Activated T-helper 1 cell treated with anti-CD3 and anti-CD28 coated beads, Interleukin-12 subunit alpha, Interleukin-12 subunit beta, Interleukin-2, Interleukin-4 antibody, amounts not matched to agents 30 ng/mL and 10 ng/mL and 1 ng/mL, durations not matched to agents 14 hours and 24 hours and 36 hours (primary cell): ENCODE measurements at regions of chr4 and their contacts with region 1.

Region 1: DNA sequence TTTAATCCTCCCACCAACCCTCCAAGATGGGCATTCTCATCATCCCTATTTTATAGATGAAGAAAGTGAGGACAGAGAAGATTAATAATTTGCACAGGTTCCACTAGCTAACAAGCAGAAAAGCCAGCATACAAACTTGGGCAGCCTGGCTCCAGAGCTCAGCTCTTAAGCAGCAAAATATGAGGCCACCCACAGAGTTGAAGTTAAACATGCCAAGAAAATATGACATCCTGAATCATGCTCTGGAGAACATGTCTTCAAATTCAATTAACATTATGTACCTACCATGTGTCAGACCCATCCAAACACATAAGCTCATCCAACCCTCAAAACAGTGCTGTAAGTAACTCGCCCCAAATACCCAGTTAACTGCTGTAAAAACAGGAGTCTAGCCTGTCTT is 33.9 kb downstream of the USP46 start:
- DNase-seq: no peak
- H3K4me3 Mint-ChIP-seq: no peak overlapping the region
- H3K27ac Mint-ChIP-seq: no peak overlapping the region
- H3K4me1 Mint-ChIP-seq: no peaks in the 10 kb centered on the region
- H3K27me3 Mint-ChIP-seq: peaks cover 2% of the 10 kb centered on the region

Region 2: GRCh38 chr4:52643785-52644244 is 18.6 kb after region 1 on chr4:
- intact Hi-C with region 1: loop called (anchors 2 kb)
- DNase-seq: no peak
- H3K4me3 Mint-ChIP-seq: no peak overlapping the region
- H3K27ac Mint-ChIP-seq: no peak overlapping the region
- H3K4me1 Mint-ChIP-seq: peaks cover 12% of the 10 kb centered on the region
- H3K27me3 Mint-ChIP-seq: peaks cover 6% of the 10 kb centered on the region

Region 3: DNA sequence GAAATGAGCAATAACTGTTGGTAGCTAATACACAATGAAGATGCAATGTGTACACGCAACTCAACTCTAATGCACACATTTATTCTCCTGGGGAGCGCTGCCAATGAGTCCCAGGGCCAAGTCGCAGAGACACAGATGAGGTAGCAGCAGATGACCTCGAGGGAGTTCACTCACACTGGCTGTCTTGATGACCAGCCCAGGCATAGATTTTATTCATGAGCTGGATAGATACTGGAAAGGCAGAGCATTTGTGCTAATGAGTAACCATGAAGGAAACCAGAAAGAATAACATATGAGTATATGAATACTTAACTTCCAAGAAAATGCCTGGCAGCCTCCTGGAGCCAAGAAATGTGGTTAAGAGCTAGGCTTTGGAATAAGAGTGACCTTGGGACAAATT is 279.2 kb after region 1 on chr4:
- intact Hi-C with region 1: no loop called
- DNase-seq: no peak
- H3K4me3 Mint-ChIP-seq: no peak overlapping the region
- H3K27ac Mint-ChIP-seq: no peak overlapping the region
- H3K4me1 Mint-ChIP-seq: no peaks in the 10 kb centered on the region
- H3K27me3 Mint-ChIP-seq: no peaks in the 10 kb centered on the region